ENCODE measurements at regions of chr6 and their contacts with region 1.

Region 1: DNA sequence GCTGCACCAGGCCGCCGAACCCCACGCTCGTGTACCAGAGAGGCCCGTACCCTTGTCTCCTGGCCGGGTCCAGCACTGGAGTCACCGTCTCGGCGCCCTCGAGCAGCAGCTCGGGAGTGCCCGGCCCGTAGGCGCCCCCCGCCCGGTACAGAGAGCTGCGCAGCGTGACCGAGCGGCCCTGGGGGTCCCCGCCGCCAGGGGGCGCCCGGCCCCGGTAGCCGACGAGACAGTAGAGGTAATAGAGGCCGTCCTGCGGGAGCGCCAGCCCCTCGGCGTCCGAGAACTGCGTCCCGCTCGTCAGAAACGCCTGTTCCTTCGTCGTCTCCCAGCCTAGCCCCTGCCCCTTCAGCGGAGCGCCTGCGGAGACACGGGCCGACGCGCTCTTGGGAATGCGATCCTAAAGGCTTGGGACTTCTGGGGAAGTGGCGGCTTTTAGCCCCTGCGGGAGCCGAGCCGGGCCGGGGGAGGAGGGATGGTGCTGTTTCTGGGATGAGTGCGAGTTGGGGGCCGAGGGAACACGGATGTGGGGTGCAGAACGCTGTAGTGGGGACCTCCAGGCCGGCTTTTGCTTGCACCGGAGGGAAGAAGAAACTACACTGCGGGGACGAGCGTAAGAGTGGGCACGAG is 1.3 kb downstream of the LTB start:
- DNase-seq: peak; percentile 90 to 95 (median 92)
- ATAC-seq: peak; percentile 93 to 98 (median 98)
- H3K4me3 ChIP-seq: peak overlapping the region; percentile 67 to 98 (median 84)
- H3K27ac ChIP-seq: peak overlapping the region; percentile 71 to 95 (median 85)
- H3K4me1 ChIP-seq: peaks cover 0 to 83% (median 15%) of the 10 kb centered on the region in 12 donors
- H3K27me3 ChIP-seq: no peaks in the 10 kb centered on the region
- CTCF ChIP-seq: peak; percentile 31 to 100 (median 99)
- POLR2A ChIP-seq: peak in 1 of 2 donors; percentile 39

Region 2: DNA sequence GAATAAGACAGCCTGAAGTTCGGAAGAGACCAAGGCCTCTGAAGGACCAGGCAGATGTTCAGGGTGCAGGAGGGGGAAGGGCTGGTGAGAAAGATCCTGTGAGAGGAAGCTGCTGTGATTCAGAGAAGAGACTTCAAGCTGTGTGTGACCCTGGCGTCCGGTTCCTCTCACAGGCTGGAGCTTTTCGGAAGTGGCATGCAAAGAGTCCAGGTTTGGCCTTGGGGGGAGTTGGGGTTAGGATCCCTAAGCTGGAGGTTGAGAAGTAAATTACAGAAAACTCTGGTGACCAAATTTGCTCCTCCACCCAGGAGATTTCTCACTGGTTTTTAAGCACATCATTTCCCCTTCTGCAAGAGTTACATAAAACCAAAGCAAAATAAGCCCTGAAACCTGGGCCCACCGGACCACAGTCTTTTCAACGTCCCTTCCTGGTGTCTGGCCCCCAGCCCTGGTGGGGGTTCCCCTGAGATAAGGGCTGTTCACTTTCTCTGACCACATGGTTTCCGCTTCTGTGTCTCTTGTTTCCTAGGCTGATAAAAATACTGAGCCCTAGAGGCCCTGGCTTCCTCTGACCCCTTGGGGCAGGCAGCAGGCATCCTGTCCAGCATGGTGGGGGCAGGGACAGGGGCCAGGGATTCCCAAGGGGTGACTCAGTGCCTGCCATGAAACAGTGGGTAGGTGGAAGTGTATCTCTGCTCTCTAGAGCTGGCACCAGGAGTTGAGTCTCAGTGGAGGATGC is 20.8 kb before region 1 on chr6:
- intact Hi-C with region 1: loop called in 1 of 10 experiments (anchors 2 kb)
- DNase-seq: peak; percentile 74 to 87 (median 84)
- ATAC-seq: peak; percentile 59 to 93 (median 87)
- H3K4me3 ChIP-seq: peak overlapping the region in 3 of 12 donors; percentile 3 to 38 (median 15)
- H3K27ac ChIP-seq: peak overlapping the region; percentile 7 to 90 (median 78)
- H3K4me1 ChIP-seq: peaks cover 7 to 80% (median 35%) of the 10 kb centered on the region in 12 donors
- H3K27me3 ChIP-seq: no peaks in the 10 kb centered on the region
- CTCF ChIP-seq: peak in 1 of 12 donors; percentile 19
- POLR2A ChIP-seq: no peak

Region 3: GRCh38 chr6:31597006-31597405 is 16.1 kb after region 1 on chr6:
- intact Hi-C with region 1: loop called in 7 of 10 experiments (anchors 1 to 2 kb)
- DNase-seq: no peak
- ATAC-seq: peak in 3 of 4 donors; percentile 53 to 63 (median 57)
- H3K4me3 ChIP-seq: no peak overlapping the region
- H3K27ac ChIP-seq: no peak overlapping the region
- H3K4me1 ChIP-seq: peaks cover 0 to 13% (median 0%) of the 10 kb centered on the region in 12 donors
- H3K27me3 ChIP-seq: no peaks in the 10 kb centered on the region
- CTCF ChIP-seq: peak in 11 of 12 donors; percentile 15 to 50 (median 45)
- POLR2A ChIP-seq: no peak